IMR-90 (cell line): ENCODE measurements at regions of chr10 and their contacts with region 1.

Region 1: DNA sequence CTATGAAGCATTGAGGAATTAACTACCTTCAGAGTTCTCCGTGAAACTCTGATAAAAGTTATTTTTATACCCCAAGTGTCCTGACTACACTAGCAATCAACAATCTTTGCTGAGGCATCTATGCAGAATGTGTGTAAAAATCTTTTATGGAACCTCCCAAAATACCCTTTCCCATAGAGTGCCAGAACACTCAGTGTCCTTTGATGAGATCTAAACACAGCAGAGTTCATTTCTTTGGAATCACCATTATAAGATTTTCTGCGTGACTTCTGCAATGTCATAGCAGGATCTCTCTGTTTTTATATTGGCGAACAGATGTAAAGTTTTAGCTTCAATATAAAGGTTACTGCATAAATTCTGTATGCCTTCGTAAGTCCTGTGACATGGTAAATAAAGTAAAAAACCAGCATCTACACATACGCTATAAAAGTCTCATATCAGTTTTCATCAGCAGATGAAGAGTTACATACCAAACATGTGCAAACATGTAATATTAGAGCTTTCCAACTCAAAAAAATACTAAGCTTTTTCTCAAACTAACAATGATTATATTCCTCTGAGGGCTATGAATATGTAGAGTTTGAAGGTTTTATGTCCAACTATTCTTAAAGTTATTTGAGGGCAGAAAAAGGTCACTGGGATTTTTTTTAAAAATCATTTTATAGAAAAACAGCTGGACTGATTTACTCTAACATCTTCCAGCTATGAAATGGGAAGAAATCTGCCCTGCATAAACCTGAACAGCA is 67.2 kb downstream of the SKIDA1 start:
- DNase-seq: no peak
- ATAC-seq: no peak
- H3K4me3 ChIP-seq: no peak overlapping the region
- H3K27ac ChIP-seq: no peak overlapping the region
- H3K4me1 ChIP-seq: no peaks in the 10 kb centered on the region
- H3K27me3 ChIP-seq: no peaks in the 10 kb centered on the region
- CTCF ChIP-seq: no peak
- POLR2A ChIP-seq: no peak
- RAD21 ChIP-seq: no peak

Region 2: DNA sequence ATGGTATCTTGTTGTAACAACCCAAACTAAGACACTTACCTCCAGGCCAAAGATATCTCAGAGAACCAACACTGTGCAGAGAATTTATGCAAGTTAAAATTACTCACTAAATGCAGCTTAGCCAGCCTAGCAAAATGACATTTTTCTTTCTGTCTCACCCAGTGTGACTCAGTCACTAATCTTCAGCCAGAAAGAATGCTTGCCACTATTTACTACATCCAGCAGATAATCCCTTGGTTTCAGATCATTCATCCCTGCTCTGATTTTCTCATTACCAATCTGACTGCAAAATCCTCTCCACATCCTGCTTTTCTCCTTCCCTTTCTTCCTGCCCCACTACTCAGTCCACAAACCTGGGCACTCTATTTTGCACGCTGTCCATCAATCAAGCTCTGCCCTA is 467.7 kb before region 1 on chr10:
- CTCF ChIA-PET with region 1: no interaction called
- POLR2A ChIA-PET with region 1: no interaction called
- dilution Hi-C with region 1: no loop called
- in situ Hi-C with region 1: no loop called
- intact Hi-C with region 1: no loop called
- DNase-seq: no peak
- ATAC-seq: no peak
- H3K4me3 ChIP-seq: no peak overlapping the region
- H3K27ac ChIP-seq: no peak overlapping the region
- H3K4me1 ChIP-seq: no peaks in the 10 kb centered on the region
- H3K27me3 ChIP-seq: no peaks in the 10 kb centered on the region
- CTCF ChIP-seq: no peak
- POLR2A ChIP-seq: no peak
- RAD21 ChIP-seq: no peak

Region 3: DNA sequence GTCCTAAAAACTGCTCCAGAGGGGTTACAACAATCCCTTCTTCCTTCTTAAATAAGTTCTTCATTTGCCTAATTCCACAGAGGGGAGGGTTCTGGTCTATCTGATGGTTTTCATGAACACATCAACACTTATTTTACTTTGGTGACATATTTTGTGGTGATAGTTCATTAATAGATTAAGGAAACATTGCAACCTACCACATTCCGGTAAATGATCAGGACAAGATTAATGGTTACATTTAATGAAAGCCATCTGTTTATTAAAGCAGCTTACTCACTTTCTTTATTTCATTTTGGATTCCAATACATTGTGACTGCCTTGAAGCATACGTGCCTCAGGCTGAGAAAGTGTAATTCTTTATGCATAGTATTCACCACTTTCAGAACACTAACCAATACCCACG is 33.8 kb before region 1 on chr10:
- CTCF ChIA-PET with region 1: no interaction called
- POLR2A ChIA-PET with region 1: no interaction called
- dilution Hi-C with region 1: no loop called
- in situ Hi-C with region 1: no loop called
- intact Hi-C with region 1: loop called (anchors 5 kb)
- DNase-seq: peak; percentile 61
- ATAC-seq: 0 out of 2 replicates have a peak, but pooled peaks have one; percentile 35
- H3K4me3 ChIP-seq: no peak overlapping the region
- H3K27ac ChIP-seq: no peak overlapping the region
- H3K4me1 ChIP-seq: no peaks in the 10 kb centered on the region
- H3K27me3 ChIP-seq: no peaks in the 10 kb centered on the region
- CTCF ChIP-seq: no peak
- POLR2A ChIP-seq: no peak
- RAD21 ChIP-seq: no peak

Region 4: DNA sequence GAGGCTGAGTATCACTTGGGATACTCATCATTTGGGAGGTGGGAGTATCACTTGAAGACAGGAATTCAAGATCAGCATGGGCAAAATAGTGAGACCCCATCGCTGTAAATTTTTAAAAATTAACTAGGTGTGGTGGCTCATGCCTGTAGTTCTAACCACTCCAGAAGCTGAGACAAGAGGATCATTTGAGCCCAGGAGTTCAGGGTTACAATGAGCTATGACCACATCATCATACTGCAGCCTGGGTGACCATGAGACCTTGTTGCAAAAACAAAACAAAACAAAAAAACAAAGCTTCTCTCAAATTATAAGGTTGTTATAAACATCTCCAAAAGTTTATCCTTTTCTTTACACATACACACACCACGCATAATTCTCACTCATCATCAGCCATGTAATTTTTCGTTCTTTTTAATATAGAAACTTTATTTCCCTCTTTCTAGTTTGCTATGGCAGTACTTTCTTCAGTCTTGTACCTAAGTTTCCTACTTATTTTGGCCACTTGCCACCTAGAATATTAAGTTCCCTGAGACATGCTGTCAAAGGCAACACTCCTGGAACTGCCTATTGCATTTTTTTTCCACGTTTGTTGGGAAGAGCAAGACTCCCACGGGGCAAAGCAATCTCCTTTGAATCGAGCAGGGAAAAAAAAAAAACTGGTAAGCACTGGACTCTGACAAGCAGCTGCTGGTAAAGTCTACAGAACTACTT is 30.1 kb after region 1 on chr10:
- CTCF ChIA-PET with region 1: no interaction called
- POLR2A ChIA-PET with region 1: no interaction called
- dilution Hi-C with region 1: no loop called
- in situ Hi-C with region 1: no loop called
- intact Hi-C with region 1: no loop called
- DNase-seq: no peak
- ATAC-seq: no peak
- H3K4me3 ChIP-seq: no peak overlapping the region
- H3K27ac ChIP-seq: no peak overlapping the region
- H3K4me1 ChIP-seq: no peaks in the 10 kb centered on the region
- H3K27me3 ChIP-seq: no peaks in the 10 kb centered on the region
- CTCF ChIP-seq: no peak
- POLR2A ChIP-seq: no peak
- RAD21 ChIP-seq: no peak